Activated CD4-positive, alpha-beta T cell treated with anti-CD3 and anti-CD28 coated beads for 36 hours (primary cell): ENCODE measurements at regions of chr6 and their contacts with region 1.

Region 1: DNA sequence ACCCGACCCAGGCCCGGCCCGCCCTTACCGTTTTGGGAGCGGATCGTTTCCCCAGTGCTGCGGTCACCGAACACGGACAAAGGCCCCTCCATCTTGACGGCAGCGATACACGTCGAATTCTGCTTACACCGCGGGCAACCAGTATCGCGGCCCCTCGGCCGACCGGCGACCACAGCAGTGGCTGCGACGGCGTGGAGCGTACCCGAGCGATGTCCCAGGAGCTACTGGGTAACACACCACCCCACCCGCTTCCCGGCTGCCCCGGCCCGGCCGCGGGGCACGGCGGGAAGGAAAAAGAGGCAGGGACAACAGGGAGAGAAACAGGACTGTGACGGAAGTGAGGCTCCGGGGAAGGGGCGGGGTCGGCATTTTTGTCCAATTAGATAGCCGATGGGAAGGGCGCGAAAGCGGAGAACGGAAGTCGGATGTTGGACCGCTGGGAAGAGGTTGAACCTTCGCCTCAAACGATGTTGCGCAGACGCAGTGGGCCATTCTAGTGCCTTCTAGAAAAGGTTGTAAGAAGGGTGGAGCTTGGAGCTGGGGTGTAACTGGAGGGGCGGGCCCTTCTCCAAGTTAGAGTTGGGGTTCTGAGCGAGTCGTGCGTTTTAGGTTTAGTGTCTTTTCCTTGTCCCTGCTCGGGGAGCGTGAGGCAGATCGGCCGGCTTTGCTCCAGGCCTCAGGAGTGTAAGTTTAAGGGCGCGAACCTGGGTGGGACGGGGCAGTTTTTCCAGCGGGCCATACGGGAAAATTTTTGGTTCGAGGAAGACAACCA is at the start of gene TCP1:
- DNase-seq: peak; percentile 100
- ATAC-seq: peak; percentile 89
- H3K4me3 Mint-ChIP-seq: peak within 1 kb of the TSS; percentile 86
- H3K27ac Mint-ChIP-seq: peak within 1 kb of the TSS; percentile 99
- H3K4me1 Mint-ChIP-seq: peaks cover 62% of the 10 kb centered on the region
- H3K27me3 Mint-ChIP-seq: no peaks in the 10 kb centered on the region
- total RNA-seq, gene TCP1: 358 to 496 TPM

Region 2: GRCh38 chr6:158819213-158819909 is 970.2 kb before region 1 on chr6 and contains the start of gene EZR:
- CTCF ChIA-PET with region 1: no interaction called
- POLR2A ChIA-PET with region 1: no interaction called
- intact Hi-C with region 1: loop called in 1 of 2 experiments (anchors 5 kb)
- DNase-seq: peak; percentile 91
- ATAC-seq: peak; percentile 52
- H3K4me3 Mint-ChIP-seq: peak within 1 kb of the TSS; percentile 93
- H3K27ac Mint-ChIP-seq: peak within 1 kb of the TSS; percentile 87
- H3K4me1 Mint-ChIP-seq: peaks cover 38% of the 10 kb centered on the region
- H3K27me3 Mint-ChIP-seq: no peaks in the 10 kb centered on the region
- total RNA-seq, gene EZR: 197 to 203 TPM

Region 3: DNA sequence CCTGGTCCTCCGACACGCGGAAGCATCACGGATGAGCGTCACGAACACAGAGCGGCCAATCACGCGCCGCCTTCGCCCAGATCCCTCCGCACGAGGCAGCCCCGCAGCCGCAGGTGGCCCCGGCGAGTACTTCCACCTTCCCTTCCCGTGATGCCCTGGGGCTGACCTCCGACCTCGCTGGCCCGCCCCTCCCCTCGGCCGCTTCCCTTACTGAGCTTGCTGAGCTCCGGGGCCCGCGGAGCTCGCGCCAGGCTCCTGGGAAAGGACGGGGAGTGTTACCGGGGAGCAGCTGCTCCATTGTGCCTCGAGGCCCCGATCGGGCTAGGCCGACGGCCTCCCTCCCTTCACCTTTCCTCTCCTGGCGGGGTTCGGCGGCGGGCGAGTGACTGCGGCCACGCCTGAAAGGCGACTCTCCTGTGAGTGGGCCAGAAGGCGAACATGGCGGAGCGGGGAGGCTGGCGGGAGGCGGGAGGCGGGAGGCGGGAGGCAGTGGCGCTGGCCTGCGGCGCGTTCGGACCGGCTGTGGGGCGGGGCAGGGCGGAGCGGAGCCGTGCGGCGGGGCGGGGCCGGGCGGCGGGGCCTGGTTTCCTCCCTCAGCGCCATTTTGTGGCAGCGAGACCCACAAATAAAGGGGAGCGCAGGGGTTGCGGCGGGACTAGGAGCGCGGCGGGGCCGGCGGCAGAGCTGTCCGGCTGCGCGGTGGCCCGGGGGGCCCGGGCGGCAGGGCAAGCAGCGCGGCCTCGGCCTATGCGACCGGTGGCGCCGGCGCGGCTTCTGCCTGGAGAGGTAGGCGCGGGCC is 62.4 kb before region 1 on chr6 and contains the start of gene WTAP:
- CTCF ChIA-PET with region 1: interaction called, 4 read pairs
- POLR2A ChIA-PET with region 1: interaction called, 44 read pairs
- intact Hi-C with region 1: loop called (anchors 1 kb)
- DNase-seq: peak; percentile 99
- ATAC-seq: peak; percentile 91
- H3K4me3 Mint-ChIP-seq: peak within 1 kb of the TSS; percentile 95
- H3K27ac Mint-ChIP-seq: peak within 1 kb of the TSS; percentile 98
- H3K4me1 Mint-ChIP-seq: peaks cover 47% of the 10 kb centered on the region
- H3K27me3 Mint-ChIP-seq: no peaks in the 10 kb centered on the region
- total RNA-seq, gene WTAP: 87.2 to 91.5 TPM

Region 4: GRCh38 chr6:159754959-159755914 is 34.3 kb before region 1 on chr6:
- CTCF ChIA-PET with region 1: interaction called, 4 read pairs
- POLR2A ChIA-PET with region 1: interaction called, 24 read pairs
- intact Hi-C with region 1: loop called in 1 of 2 experiments (anchors 5 kb)
- DNase-seq: no peak
- ATAC-seq: no peak
- H3K4me3 Mint-ChIP-seq: no peak overlapping the region
- H3K27ac Mint-ChIP-seq: peak overlapping the region; percentile 65
- H3K4me1 Mint-ChIP-seq: peaks cover 11% of the 10 kb centered on the region
- H3K27me3 Mint-ChIP-seq: no peaks in the 10 kb centered on the region

Region 5: DNA sequence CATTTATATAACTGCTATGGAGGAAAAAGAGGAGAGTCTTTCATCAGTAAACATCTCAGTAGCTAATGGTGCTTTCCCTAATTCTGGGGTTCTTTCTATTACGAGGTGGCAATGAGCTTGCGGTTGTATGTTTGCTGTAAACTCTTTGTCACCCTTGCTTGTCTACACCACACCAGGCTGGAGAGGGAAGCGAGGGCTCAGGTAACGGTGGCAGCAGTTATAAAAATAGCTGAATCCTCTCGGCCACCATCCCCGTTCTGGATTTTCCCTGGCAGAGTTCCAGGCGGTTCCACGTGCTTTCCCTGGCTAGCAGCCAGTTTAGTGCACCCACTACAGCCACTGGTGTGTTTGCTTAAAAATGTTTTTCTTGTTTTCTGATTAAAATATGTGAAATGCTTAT is 140.3 kb after region 1 on chr6:
- CTCF ChIA-PET with region 1: interaction called, 4 read pairs
- POLR2A ChIA-PET with region 1: interaction called, 4 read pairs
- intact Hi-C with region 1: loop called (anchors 1 to 5 kb)
- DNase-seq: peak; percentile 66
- ATAC-seq: peak; percentile 24
- H3K4me3 Mint-ChIP-seq: no peak overlapping the region
- H3K27ac Mint-ChIP-seq: peak overlapping the region; percentile 88
- H3K4me1 Mint-ChIP-seq: peaks cover 34% of the 10 kb centered on the region
- H3K27me3 Mint-ChIP-seq: peaks cover 4% of the 10 kb centered on the region

Region 6: DNA sequence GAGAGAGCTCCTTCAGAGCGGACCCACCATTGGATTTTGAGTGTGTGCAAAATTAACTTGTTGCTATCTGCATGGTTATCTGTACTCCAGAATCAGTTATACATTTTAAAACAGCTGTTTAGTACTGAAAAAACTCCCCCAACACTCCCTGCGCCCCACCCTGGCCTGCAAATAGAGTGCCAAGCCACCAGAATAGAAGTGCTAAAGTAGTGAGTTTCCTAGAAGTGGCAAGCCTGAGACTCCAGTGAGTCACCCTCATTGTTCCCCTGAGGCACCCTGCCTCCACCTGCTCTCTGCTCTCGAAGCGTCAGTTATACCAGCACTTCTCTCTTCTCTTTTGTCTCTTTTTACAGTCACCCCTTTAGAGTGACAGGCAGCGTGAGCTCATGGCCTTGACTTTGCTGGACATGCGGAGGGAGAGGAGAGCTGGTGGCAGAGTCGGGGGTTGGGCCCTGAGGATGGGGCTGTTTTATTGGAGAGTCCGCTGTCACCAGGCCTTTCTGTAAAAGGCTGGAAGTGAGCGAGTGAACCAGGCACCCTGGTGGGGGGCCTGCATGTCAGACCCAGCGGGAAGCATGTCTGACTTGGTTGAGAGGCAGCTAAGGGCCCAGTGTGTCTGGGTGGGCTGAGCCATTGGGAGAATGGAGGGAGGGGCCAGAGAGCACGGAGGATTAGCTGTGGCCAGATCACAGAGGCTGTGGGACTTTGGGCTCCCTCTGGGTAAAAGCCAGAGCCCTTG is 189.7 kb after region 1 on chr6:
- CTCF ChIA-PET with region 1: no interaction called
- POLR2A ChIA-PET with region 1: no interaction called
- intact Hi-C with region 1: loop called in 1 of 2 experiments (anchors 2 kb)
- DNase-seq: peak; percentile 82
- ATAC-seq: peak; percentile 83
- H3K4me3 Mint-ChIP-seq: peak overlapping the region; percentile 74
- H3K27ac Mint-ChIP-seq: peak overlapping the region; percentile 99
- H3K4me1 Mint-ChIP-seq: peaks cover 96% of the 10 kb centered on the region
- H3K27me3 Mint-ChIP-seq: no peaks in the 10 kb centered on the region